ENCODE measurements at regions of chr11 and their contacts with region 1.

Region 1: GRCh38 chr11:94623120-94623735 is 56.1 kb downstream of the PIWIL4 start:
- DNase-seq: peak; percentile 10
- H3K4me3 ChIP-seq: no peak overlapping the region
- CTCF ChIP-seq: peak; percentile 73

Region 2: DNA sequence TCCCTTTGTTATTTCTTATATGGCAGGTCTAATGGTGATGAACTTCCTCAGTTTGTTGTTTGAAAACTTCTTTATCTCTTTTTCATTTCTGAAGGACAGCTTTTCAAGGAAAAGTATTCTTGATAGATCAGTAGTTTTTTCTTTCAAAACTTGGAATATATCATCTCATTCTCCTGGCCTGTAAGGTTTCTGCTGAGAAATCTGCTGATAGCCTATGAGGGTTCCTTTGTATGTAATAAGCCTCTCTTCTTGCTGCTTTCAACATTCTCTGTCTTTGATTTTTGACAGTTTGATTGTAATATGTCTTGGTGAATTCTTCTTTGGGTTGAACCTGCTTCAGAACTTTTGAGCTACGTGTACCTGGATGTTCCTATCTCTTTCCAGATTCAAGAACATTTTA is 10.1 kb before region 1 on chr11:
- CTCF ChIA-PET with region 1: interaction called, 52 read pairs
- POLR2A ChIA-PET with region 1: no interaction called
- DNase-seq: no peak
- H3K4me3 ChIP-seq: no peak overlapping the region
- CTCF ChIP-seq: no peak

Region 3: DNA sequence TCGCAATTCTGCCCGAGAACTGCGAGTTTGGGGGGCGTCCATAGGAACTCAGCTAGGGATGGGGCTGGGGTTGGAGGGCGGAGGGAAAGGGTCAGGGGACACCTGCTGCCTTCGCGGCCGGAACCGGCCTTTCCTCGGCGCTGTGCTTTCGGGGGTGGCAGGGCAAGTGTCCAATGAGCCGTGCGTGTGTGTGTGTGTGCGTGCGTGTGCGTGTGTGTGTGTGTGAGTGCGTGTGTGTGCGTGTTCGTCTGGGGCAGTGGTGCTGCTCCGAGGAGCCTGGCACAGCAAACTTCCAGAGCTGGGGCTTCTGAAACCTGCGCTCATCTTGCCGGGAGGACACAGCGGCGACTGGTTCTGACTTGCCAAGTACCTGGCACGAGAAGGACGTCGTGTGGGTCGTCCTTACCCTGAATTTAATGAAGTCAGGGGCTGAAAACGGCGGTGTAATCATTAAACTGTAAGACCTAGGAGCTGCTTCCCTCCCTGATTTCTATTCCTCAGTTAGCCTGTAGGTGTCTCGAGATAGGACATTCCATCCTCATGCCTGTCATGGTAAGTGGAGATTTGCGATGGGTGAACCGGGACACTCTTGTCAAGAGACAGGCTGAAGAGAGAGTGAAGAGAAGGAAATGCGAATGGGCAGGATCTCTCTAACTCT is 117.9 kb after region 1 on chr11:
- CTCF ChIA-PET with region 1: interaction called, 21 read pairs
- POLR2A ChIA-PET with region 1: no interaction called
- DNase-seq: no peak
- H3K4me3 ChIP-seq: peak overlapping the region; percentile 59
- CTCF ChIP-seq: peak; percentile 56

Region 4: GRCh38 chr11:94786264-94787126 is 163.3 kb after region 1 on chr11:
- CTCF ChIA-PET with region 1: interaction called, 13 read pairs
- POLR2A ChIA-PET with region 1: no interaction called
- DNase-seq: no peak
- H3K4me3 ChIP-seq: no peak overlapping the region
- CTCF ChIP-seq: peak; percentile 35

Region 5: GRCh38 chr11:94910779-94911178 is 287.6 kb after region 1 on chr11:
- CTCF ChIA-PET with region 1: interaction called, 10 read pairs
- POLR2A ChIA-PET with region 1: no interaction called
- DNase-seq: peak; percentile 84
- H3K4me3 ChIP-seq: no peak overlapping the region
- CTCF ChIP-seq: no peak

Region 6: GRCh38 chr11:95089620-95090542 is 466.7 kb after region 1 on chr11 and contains the start of gene ENDOD1:
- CTCF ChIA-PET with region 1: no interaction called
- POLR2A ChIA-PET with region 1: no interaction called
- DNase-seq: no peak
- H3K4me3 ChIP-seq: peak within 1 kb of the TSS; percentile 71
- CTCF ChIP-seq: no peak

Measured in AG04449 (cell line).